ENCODE measurements at regions of chr9 and their contacts with region 1.

Region 1: GRCh38 chr9:105157130-105157583 is 87.3 kb upstream of the SLC44A1 start:
- DNase-seq: peak; percentile 27
- H3K4me3 Mint-ChIP-seq: no peak overlapping the region
- H3K27ac Mint-ChIP-seq: no peak overlapping the region
- H3K4me1 Mint-ChIP-seq: peaks cover 11% of the 10 kb centered on the region
- H3K27me3 Mint-ChIP-seq: no peaks in the 10 kb centered on the region

Region 2: DNA sequence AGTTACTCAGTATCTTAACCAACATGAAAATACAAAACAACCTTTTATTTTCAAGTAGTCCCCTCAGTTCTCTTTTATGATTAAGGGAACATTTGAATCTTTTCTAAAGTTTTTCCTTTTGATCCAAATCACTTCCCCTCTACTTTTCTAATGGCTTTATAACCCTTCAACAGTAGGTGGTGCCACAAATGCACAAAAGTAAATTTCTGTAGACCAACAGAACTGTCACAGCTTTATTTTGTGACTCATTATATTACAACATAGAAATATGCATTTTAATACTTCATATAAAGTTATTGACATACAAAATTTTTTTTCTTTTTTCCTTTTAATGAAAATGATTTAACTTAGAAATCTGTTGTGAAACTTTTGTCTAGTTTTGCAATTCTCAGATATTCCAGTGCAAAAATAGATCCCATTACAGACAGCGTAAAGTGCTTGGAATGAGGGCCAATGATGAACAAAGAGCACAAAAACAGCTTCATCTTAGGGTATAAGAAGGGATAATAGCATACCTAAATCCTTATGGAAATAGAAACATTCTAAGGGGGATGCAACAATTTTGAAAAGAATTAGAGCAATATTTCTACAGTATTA is 376.3 kb before region 1 on chr9:
- CTCF ChIA-PET with region 1: no interaction called
- POLR2A ChIA-PET with region 1: no interaction called
- intact Hi-C with region 1: loop called (anchors 5 kb)
- DNase-seq: no peak
- H3K4me3 Mint-ChIP-seq: no peak overlapping the region
- H3K27ac Mint-ChIP-seq: no peak overlapping the region
- H3K4me1 Mint-ChIP-seq: no peaks in the 10 kb centered on the region
- H3K27me3 Mint-ChIP-seq: peaks cover 1% of the 10 kb centered on the region

Region 3: GRCh38 chr9:104863180-104863883 is 293.8 kb before region 1 on chr9:
- CTCF ChIA-PET with region 1: interaction called, 13 read pairs
- POLR2A ChIA-PET with region 1: no interaction called
- intact Hi-C with region 1: loop called (anchors 1 kb)
- DNase-seq: peak; percentile 57
- H3K4me3 Mint-ChIP-seq: no peak overlapping the region
- H3K27ac Mint-ChIP-seq: no peak overlapping the region
- H3K4me1 Mint-ChIP-seq: peaks cover 3% of the 10 kb centered on the region
- H3K27me3 Mint-ChIP-seq: no peaks in the 10 kb centered on the region

Region 4: DNA sequence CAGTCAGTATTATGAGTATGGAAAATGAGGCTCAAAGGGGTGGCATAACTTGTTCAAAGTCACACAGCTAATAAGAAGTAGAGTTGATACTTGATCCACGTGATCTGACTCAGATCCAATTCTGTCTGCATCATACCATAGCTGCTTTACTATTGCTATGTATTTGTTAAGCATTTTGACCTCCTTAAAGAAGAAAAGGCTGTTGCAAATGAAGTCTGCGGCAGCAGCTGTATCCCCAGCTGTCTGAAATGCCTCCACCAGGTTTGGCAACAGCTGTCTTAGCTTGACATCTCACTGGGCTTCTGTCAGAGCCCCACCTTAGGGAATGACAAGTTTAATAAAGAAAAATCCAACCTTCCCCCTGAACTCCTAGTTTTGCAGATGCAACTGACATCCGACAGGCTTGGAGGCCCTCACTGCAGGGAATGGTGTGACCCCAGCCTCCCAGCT is 11.7 kb after region 1 on chr9:
- CTCF ChIA-PET with region 1: no interaction called
- POLR2A ChIA-PET with region 1: no interaction called
- intact Hi-C with region 1: no loop called
- DNase-seq: no peak
- H3K4me3 Mint-ChIP-seq: no peak overlapping the region
- H3K27ac Mint-ChIP-seq: no peak overlapping the region
- H3K4me1 Mint-ChIP-seq: no peaks in the 10 kb centered on the region
- H3K27me3 Mint-ChIP-seq: peaks cover 8% of the 10 kb centered on the region

Region 5: GRCh38 chr9:105414947-105415661 is 257.9 kb after region 1 on chr9:
- CTCF ChIA-PET with region 1: interaction called, 22 read pairs
- POLR2A ChIA-PET with region 1: no interaction called
- intact Hi-C with region 1: loop called (anchors 1 kb)
- DNase-seq: peak; percentile 53
- H3K4me3 Mint-ChIP-seq: no peak overlapping the region
- H3K27ac Mint-ChIP-seq: no peak overlapping the region
- H3K4me1 Mint-ChIP-seq: peaks cover 4% of the 10 kb centered on the region
- H3K27me3 Mint-ChIP-seq: peaks cover 37% of the 10 kb centered on the region